ENCODE measurements at regions of chr10 and their contacts with region 1.

Region 1: DNA sequence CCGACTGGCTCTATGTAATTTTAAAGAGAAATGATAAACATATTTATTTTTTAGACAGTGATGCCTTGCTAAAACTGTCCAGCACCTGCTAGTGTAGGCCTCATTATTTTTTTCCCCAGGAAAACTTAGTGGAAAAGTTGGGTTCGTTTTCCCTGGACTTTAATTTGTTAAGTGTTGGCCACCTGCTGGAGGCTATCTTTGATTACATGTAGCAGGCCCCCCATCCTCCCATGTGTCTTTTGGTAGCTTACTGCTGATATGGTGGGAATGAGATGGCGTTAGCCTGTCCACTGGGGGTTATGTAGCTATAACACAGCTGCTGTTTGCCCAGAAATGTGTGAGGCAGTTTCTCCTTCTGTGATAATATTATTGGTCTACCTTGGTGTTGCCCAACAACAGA is 265.0 kb downstream of the SORCS3 start:
- DNase-seq: no peak
- H3K4me3 ChIP-seq: no peak overlapping the region
- H3K27ac ChIP-seq: no peak overlapping the region
- H3K4me1 ChIP-seq: no peaks in the 10 kb centered on the region
- H3K27me3 ChIP-seq: no peaks in the 10 kb centered on the region
- CTCF ChIP-seq: no peak
- EP300 ChIP-seq: no peak
- POLR2A ChIP-seq: no peak

Region 2: DNA sequence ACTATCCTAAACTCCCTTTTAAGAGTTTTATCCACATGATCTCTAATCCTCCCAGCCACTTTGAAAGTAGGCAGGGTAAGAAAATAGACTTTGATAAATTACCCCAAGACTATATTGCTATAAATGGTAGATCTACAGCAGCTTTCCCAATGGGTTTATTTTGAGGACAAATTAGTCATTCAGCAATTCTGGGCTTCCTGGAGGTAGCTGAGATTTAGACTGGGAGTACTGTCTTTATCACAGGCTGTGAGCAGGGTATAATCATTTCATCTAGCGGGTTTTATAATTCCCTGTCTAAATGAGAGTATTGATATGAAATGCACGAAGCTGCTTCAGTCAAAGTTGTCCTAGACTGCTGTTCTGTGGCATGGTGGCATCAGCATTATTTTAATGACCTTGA is 14.4 kb after region 1 on chr10:
- in situ Hi-C with region 1: no loop called
- intact Hi-C with region 1: loop called (anchors 1 kb)
- DNase-seq: no peak
- H3K4me3 ChIP-seq: no peak overlapping the region
- H3K27ac ChIP-seq: no peak overlapping the region
- H3K4me1 ChIP-seq: no peaks in the 10 kb centered on the region
- H3K27me3 ChIP-seq: no peaks in the 10 kb centered on the region
- CTCF ChIP-seq: no peak
- EP300 ChIP-seq: no peak
- POLR2A ChIP-seq: no peak

Region 3: GRCh38 chr10:105138358-105138757 is 232.2 kb after region 1 on chr10:
- in situ Hi-C with region 1: no loop called
- intact Hi-C with region 1: no loop called
- DNase-seq: no peak
- H3K4me3 ChIP-seq: no peak overlapping the region
- H3K27ac ChIP-seq: no peak overlapping the region
- H3K4me1 ChIP-seq: no peaks in the 10 kb centered on the region
- H3K27me3 ChIP-seq: no peaks in the 10 kb centered on the region
- CTCF ChIP-seq: no peak
- EP300 ChIP-seq: no peak
- POLR2A ChIP-seq: no peak

Region 4: GRCh38 chr10:106705681-106706100 is 1799.6 kb after region 1 on chr10:
- in situ Hi-C with region 1: no loop called
- intact Hi-C with region 1: loop called (anchors 5 kb)
- DNase-seq: peak; percentile 53
- H3K4me3 ChIP-seq: no peak overlapping the region
- H3K27ac ChIP-seq: no peak overlapping the region
- H3K4me1 ChIP-seq: no peaks in the 10 kb centered on the region
- H3K27me3 ChIP-seq: no peaks in the 10 kb centered on the region
- CTCF ChIP-seq: peak; percentile 60 to 79 (median 72)
- EP300 ChIP-seq: no peak
- POLR2A ChIP-seq: no peak

Measured in transverse colon (tissue), 4 donors.